Prostate gland (tissue), 2 donors: ENCODE measurements at regions of chr9 and their contacts with region 1.

Region 1: GRCh38 chr9:117247266-117247665 is 167.6 kb downstream of the ASTN2 start:
- DNase-seq: peak; percentile 11
- H3K4me3 ChIP-seq: no peak overlapping the region
- H3K27ac ChIP-seq: no peak overlapping the region
- H3K4me1 ChIP-seq: no peaks in the 10 kb centered on the region
- H3K27me3 ChIP-seq: no peaks in the 10 kb centered on the region
- CTCF ChIP-seq: peak in 3 of 4 experiments; percentile 16 to 51 (median 39)
- POLR2A ChIP-seq: no peak

Region 2: DNA sequence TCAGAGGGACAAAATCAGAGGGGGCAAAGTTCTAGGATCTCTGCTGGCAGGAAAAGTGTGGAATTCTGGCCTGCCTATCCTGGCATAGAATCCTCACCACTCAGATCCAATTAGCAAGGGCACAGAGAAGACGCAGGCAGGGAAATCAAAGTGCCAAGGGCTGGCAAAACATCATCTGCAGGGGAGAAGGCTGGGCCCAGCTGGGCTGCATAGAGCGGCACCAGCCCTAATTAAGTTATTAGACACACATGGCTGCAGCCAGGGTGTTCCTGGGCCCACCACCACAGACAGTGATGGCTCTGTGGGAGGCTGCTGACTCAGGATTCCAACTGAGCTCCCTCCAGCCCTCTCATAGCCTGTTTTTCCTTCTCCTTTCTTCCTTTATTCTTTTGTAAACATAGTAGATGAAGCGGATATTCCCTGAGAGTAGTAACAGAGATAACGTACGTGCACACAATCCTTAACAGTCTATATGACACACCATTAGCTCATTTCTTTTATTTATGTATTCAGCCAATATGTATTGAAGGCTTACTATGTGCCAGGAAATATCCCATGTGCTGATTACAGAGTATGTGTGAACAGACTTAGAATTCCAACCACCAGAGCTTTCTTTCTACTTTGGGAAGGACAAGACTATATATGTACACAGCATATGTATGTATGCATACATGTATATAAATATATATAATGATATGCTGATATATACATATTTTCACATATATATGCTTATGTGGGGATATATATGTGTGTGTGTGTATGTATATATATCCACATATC is 68.5 kb before region 1 on chr9:
- intact Hi-C with region 1: no loop called
- DNase-seq: no peak
- H3K4me3 ChIP-seq: no peak overlapping the region
- H3K27ac ChIP-seq: no peak overlapping the region
- H3K4me1 ChIP-seq: no peaks in the 10 kb centered on the region
- H3K27me3 ChIP-seq: no peaks in the 10 kb centered on the region
- CTCF ChIP-seq: no peak
- POLR2A ChIP-seq: no peak

Region 3: GRCh38 chr9:117411548-117411947 is 164.3 kb after region 1 on chr9:
- intact Hi-C with region 1: loop called (anchors 10 kb)
- DNase-seq: peak; percentile 67
- H3K4me3 ChIP-seq: peak overlapping the region in 1 of 2 donors; percentile 67
- H3K27ac ChIP-seq: peak overlapping the region in 1 of 2 donors; percentile 77
- H3K4me1 ChIP-seq: no peaks in the 10 kb centered on the region
- H3K27me3 ChIP-seq: no peaks in the 10 kb centered on the region
- CTCF ChIP-seq: peak; percentile 51 to 89 (median 82)
- POLR2A ChIP-seq: no peak